ENCODE measurements at regions of chr17 and their contacts with region 1.

Region 1: GRCh38 chr17:39776252-39776651 is 38.5 kb downstream of the GRB7 start:
- DNase-seq: no peak
- H3K4me3 ChIP-seq: no peak overlapping the region
- H3K27ac ChIP-seq: no peak overlapping the region
- H3K27me3 ChIP-seq: peaks cover 68% of the 10 kb centered on the region
- CTCF ChIP-seq: no peak

Region 2: GRCh38 chr17:39517224-39517623 is 259.0 kb before region 1 on chr17:
- CTCF ChIA-PET with region 1: no interaction called
- POLR2A ChIA-PET with region 1: no interaction called
- DNase-seq: no peak
- H3K4me3 ChIP-seq: no peak overlapping the region
- H3K27ac ChIP-seq: no peak overlapping the region
- H3K27me3 ChIP-seq: no peaks in the 10 kb centered on the region
- CTCF ChIP-seq: no peak

Region 3: GRCh38 chr17:39533899-39534298 is 242.4 kb before region 1 on chr17:
- CTCF ChIA-PET with region 1: no interaction called
- POLR2A ChIA-PET with region 1: no interaction called
- DNase-seq: no peak
- H3K4me3 ChIP-seq: no peak overlapping the region
- H3K27ac ChIP-seq: no peak overlapping the region
- H3K27me3 ChIP-seq: no peaks in the 10 kb centered on the region
- CTCF ChIP-seq: no peak

Region 4: DNA sequence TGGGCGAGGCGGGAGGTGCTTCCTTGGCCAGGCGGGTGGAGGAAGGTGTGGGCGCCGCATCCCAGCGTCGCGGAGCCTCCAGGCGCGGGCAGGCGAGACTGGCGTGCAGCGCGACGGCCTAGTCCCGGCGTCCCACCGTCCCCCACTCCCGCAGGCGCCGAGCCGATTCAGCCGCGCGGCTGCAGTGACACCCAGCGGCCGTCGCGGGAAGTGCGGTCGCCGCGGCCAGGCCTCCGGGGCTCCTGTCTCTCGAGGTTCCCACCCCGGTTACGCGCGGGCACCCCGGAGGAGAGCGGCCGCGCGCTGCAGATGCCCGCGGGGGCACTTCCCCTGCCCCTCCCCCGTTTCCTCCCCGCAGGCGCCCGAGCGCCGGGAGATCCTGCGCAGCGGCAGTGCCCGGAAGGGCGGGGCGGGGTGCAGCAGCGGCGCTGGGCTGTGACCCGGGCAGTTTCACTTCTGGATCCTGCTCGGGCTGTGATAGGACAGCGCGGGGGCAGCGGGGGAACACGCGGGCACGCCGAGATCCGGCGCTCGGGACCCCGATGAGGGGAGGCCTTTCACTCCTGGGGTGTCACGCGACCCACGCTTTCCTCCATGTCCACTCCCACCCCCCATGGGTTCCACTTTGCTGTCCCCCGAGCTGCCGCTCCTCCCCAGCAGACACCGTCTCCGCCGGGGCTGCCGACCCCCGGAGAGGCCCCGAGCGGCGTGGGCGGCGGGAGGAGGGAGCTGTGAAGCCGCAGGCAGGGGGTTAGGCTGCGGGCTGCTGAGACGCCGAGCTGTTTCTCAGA is 21.9 kb before region 1 on chr17:
- CTCF ChIA-PET with region 1: no interaction called
- POLR2A ChIA-PET with region 1: interaction called, 11 read pairs
- DNase-seq: peak; percentile 36
- H3K4me3 ChIP-seq: peak overlapping the region; percentile 72
- H3K27ac ChIP-seq: no peak overlapping the region
- H3K27me3 ChIP-seq: peaks cover 16% of the 10 kb centered on the region
- CTCF ChIP-seq: peak; percentile 68